Common myeloid progenitor, CD34-positive (primary cell): ENCODE measurements at regions of chr1 and their contacts with region 1.

Region 1: GRCh38 chr1:85259118-85259911 is at the start of gene C1orf52:
- DNase-seq: peak; percentile 93 to 97 (median 96)
- H3K4me3 ChIP-seq: peak within 1 kb of the TSS; percentile 81 to 98 (median 94)
- H3K27ac ChIP-seq: peak within 1 kb of the TSS; percentile 72 to 93
- H3K4me1 ChIP-seq: peaks cover 8 to 18% (median 13%) of the 10 kb centered on the region in 4 experiments
- H3K27me3 ChIP-seq: no peaks in the 10 kb centered on the region

Region 2: GRCh38 chr1:85240174-85240601 is 19.1 kb before region 1 on chr1:
- CTCF ChIA-PET with region 1: interaction called, 17 read pairs
- POLR2A ChIA-PET with region 1: no interaction called
- DNase-seq: no peak
- H3K4me3 ChIP-seq: no peak overlapping the region
- H3K27ac ChIP-seq: no peak overlapping the region
- H3K4me1 ChIP-seq: peaks cover 0 to 17% (median 8%) of the 10 kb centered on the region in 4 experiments
- H3K27me3 ChIP-seq: no peaks in the 10 kb centered on the region

Region 3: GRCh38 chr1:85276215-85276977 is 17.1 kb after region 1 on chr1 and contains the start of gene BCL10:
- CTCF ChIA-PET with region 1: interaction called, 84 read pairs
- POLR2A ChIA-PET with region 1: interaction called, 5 read pairs
- DNase-seq: peak; percentile 98 to 99 (median 99)
- H3K4me3 ChIP-seq: peak within 1 kb of the TSS; percentile 67 to 99 (median 95)
- H3K27ac ChIP-seq: peak within 1 kb of the TSS; percentile 82 to 95
- H3K4me1 ChIP-seq: peaks cover 12 to 32% (median 23%) of the 10 kb centered on the region in 4 experiments
- H3K27me3 ChIP-seq: no peaks in the 10 kb centered on the region

Region 4: DNA sequence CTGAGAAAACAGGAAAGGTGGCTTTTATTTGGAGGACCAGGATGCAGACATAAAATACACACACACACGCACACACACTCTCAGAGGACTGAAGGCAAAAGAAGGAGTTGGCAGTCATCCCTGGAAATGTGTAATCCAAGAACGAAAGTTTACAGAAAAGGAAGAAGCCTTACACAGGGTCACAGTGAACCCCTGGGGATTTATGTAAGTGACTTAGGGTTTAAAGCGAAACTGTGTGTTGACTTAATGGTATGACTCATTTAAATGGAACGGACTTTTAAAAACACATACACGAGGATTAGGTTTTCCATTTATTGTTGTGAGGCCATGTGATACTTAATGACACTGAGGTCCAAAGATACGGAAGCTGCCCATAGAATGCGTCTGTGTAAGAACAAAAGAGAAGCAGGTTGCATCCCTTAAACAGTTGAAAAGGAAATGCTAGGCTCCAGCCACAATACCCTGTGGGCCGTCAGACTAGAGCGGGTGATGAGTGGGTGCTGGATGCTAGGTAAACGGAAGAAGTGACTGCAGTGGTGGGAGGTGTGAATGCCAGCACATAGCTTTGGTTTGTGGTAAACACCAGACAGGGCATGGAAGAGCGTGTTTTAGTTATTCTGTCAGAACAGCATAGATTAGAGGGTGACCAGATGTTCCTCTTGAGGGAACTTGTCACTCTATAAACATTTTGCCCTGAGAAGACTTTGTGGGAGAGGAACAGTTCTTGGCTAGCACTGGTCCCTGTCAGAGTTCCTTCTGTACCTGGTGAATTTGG is 38.7 kb after region 1 on chr1:
- CTCF ChIA-PET with region 1: no interaction called
- POLR2A ChIA-PET with region 1: no interaction called
- DNase-seq: no peak
- H3K4me3 ChIP-seq: no peak overlapping the region
- H3K27ac ChIP-seq: no peak overlapping the region
- H3K4me1 ChIP-seq: no peaks in the 10 kb centered on the region
- H3K27me3 ChIP-seq: no peaks in the 10 kb centered on the region